ENCODE measurements at regions of chr4 and their contacts with region 1.

Region 1: GRCh38 chr4:38160487-38161207 is 200.4 kb downstream of the PTTG2 start:
- DNase-seq: peak; percentile 86
- H3K4me3 ChIP-seq: no peak overlapping the region
- CTCF ChIP-seq: no peak

Region 2: GRCh38 chr4:38078590-38079421 is 81.8 kb before region 1 on chr4:
- in situ Hi-C with region 1: loop called (anchors 5 kb)
- DNase-seq: peak; percentile 47
- H3K4me3 ChIP-seq: no peak overlapping the region
- CTCF ChIP-seq: no peak

Region 3: GRCh38 chr4:38237139-38237538 is 76.5 kb after region 1 on chr4:
- in situ Hi-C with region 1: no loop called
- DNase-seq: peak; percentile 60
- H3K4me3 ChIP-seq: no peak overlapping the region
- CTCF ChIP-seq: no peak